ENCODE measurements at regions of chr19 and their contacts with region 1.

Region 1: DNA sequence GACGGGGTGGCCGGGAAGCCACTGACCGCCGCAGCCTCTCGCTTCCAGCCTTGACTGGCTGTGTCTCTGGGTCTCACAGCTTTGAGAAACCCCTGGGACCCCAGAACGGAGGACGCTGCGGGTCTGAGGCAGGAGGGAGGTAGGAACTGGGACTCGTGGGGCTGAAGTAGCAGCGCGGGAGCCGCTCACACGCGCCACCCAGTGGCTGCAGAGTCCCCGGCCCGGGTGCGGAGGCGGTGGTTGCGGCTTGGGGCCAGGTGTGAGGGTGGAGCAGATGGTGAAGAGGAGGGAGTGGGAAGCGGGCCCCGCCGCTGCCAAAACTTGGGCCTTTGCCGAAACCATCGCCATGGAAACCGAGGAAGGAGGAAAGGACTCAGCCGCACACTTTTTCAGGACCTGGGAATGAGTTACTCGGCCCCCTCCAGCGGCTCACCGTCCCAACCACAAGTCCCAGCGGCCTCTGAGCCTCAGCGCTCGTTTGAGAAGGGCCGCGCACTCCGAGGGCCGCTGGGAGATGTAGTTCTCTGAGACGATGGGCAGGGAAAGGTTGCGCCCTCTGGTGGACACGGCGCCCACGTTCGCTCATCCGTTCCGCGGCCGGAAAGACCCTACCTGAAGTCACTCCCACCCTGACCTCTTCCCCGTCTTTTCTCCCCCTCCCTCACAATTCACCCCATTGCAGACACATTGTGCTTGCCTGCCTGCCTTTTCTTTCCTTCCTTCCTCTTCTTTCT is 2.2 kb upstream of the SLC17A7 start:
- DNase-seq: peak; percentile 97
- ATAC-seq: peak; percentile 91
- H3K4me3 Mint-ChIP-seq: peak overlapping the region; percentile 73
- H3K27ac Mint-ChIP-seq: peak overlapping the region; percentile 83
- H3K4me1 Mint-ChIP-seq: peaks cover 33% of the 10 kb centered on the region
- H3K27me3 Mint-ChIP-seq: peaks cover 37% of the 10 kb centered on the region

Region 2: GRCh38 chr19:49085020-49085867 is 358.3 kb before region 1 on chr19 and contains the start of gene SNRNP70:
- CTCF ChIA-PET with region 1: no interaction called
- POLR2A ChIA-PET with region 1: no interaction called
- intact Hi-C with region 1: loop called in 1 of 2 experiments (anchors 2 kb)
- DNase-seq: peak; percentile 99
- ATAC-seq: peak; percentile 99
- H3K4me3 Mint-ChIP-seq: peak within 1 kb of the TSS; percentile 98
- H3K27ac Mint-ChIP-seq: peak within 1 kb of the TSS; percentile 96
- H3K4me1 Mint-ChIP-seq: peaks cover 31% of the 10 kb centered on the region
- H3K27me3 Mint-ChIP-seq: peaks cover 2% of the 10 kb centered on the region
- total RNA-seq, gene SNRNP70: 225 to 306 TPM

Region 3: DNA sequence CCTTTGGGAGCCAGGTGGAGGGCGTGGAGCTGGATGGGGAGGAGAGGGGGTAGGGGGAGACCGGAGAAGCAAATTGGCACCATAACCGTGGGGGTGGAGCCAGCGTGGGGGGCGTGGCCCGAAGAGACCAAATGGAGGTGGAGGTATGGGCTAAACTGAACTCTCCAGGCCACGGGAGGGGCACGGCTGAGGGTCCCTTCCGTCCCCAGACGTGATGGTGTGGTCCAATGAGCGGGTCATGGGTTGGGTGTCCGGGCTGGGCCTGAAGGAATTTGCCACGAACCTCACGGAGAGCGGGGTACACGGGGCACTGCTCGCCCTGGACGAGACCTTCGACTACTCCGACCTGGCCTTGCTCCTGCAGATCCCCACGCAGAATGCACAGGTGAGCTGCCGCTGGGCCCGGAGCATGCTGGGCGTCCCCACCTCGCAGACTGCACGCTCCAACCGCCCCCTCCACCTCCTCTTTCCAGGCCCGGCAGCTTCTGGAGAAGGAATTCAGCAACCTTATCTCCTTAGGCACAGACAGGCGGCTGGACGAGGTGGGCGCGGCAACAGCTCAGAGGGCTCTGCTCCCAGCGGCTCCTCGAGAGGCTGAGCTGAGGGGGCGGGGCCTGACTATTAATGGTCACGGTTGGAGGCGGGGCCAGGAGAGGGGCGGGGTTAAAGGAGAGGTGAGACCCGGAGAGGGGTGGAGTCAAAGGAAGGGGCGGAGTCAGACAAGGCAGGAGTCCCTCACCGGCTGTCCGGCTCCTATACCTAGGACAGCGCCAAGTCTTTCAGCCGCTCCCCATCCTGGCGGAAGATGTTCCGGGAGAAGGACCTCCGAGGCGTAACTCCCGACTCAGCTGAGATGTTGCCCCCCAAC is 294.5 kb before region 1 on chr19:
- CTCF ChIA-PET with region 1: no interaction called
- POLR2A ChIA-PET with region 1: no interaction called
- intact Hi-C with region 1: loop called in 1 of 2 experiments (anchors 2 kb)
- DNase-seq: peak; percentile 93
- ATAC-seq: peak; percentile 53
- H3K4me3 Mint-ChIP-seq: peak overlapping the region; percentile 67
- H3K27ac Mint-ChIP-seq: no peak overlapping the region
- H3K4me1 Mint-ChIP-seq: peaks cover 28% of the 10 kb centered on the region
- H3K27me3 Mint-ChIP-seq: peaks cover 58% of the 10 kb centered on the region

Region 4: GRCh38 chr19:49363268-49364082 is 80.1 kb before region 1 on chr19 and contains the start of gene DKKL1:
- CTCF ChIA-PET with region 1: no interaction called
- POLR2A ChIA-PET with region 1: no interaction called
- intact Hi-C with region 1: loop called in 1 of 2 experiments (anchors 1 kb)
- DNase-seq: peak; percentile 92
- ATAC-seq: peak; percentile 88
- H3K4me3 Mint-ChIP-seq: no peak within 1 kb of the TSS
- H3K27ac Mint-ChIP-seq: no peak within 1 kb of the TSS
- H3K4me1 Mint-ChIP-seq: peaks cover 11% of the 10 kb centered on the region
- H3K27me3 Mint-ChIP-seq: peaks cover 23% of the 10 kb centered on the region
- total RNA-seq, gene DKKL1: not detected

Region 5: DNA sequence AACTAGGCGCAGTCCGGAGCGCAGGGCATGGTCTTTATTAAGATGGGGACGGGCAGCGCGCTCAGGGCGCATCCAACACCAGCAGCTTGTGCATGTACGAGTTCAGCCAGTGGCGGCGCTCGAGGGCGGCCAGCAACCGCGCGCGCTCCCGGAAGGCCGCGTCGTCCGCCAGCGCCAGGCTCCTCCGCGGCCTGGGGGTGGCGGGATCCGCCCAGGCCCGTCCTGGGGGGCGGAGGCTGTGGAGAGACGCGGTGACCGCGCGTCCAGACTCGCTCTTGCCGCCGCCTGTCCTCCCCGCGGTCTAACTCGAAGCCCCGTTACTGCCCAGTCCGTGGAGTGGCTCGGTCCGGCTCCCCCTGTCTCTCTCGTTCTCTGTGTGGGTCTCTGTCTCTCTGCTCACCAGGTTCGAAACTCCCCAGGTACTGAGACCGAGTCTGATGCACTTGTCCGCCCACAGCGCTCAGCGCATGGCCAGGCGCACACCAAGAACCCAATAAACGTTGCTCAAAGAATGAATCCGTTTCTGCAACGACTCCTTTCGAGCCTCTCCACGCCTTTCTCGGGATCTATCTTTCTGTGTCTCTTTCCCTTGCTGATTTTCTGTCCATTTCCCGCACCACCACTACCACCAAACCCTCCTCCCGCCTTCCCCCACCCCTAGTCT is 21.0 kb before region 1 on chr19:
- CTCF ChIA-PET with region 1: interaction called, 3 read pairs
- POLR2A ChIA-PET with region 1: no interaction called
- intact Hi-C with region 1: loop called in 1 of 2 experiments (anchors 1 kb)
- DNase-seq: peak; percentile 83
- ATAC-seq: peak; percentile 77
- H3K4me3 Mint-ChIP-seq: peak overlapping the region; percentile 57
- H3K27ac Mint-ChIP-seq: no peak overlapping the region
- H3K4me1 Mint-ChIP-seq: peaks cover 43% of the 10 kb centered on the region
- H3K27me3 Mint-ChIP-seq: peaks cover 72% of the 10 kb centered on the region

Region 6: DNA sequence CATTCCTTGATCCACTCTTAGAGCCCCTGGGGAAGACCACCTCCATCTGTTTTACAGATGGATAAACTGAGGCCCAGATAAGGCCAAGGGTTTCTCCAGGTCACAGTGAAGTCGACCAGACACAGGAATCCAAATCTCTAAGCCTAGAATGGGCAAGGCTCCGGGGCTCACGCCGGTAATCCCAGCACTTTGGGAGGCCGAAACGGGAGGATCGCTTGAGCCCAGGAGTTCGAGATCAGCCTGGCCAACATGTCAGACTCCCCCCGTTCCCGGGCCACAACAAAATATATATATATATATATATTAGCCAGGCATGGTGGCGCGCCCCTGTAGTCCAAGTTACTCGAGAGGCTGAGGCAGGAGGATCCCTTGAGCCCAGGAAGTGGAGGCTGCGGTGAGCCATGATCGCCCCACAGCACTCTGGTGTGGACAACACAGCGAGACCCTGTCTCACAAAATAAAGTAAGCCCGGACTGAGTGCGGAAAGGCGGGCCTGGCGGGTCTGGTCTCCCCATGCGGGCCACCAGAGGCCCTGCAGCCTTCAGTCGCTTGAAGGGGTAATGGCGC is 43.3 kb after region 1 on chr19:
- CTCF ChIA-PET with region 1: no interaction called
- POLR2A ChIA-PET with region 1: no interaction called
- intact Hi-C with region 1: no loop called
- DNase-seq: no peak
- ATAC-seq: no peak
- H3K4me3 Mint-ChIP-seq: peak overlapping the region; percentile 99
- H3K27ac Mint-ChIP-seq: peak overlapping the region; percentile 97
- H3K4me1 Mint-ChIP-seq: peaks cover 25% of the 10 kb centered on the region
- H3K27me3 Mint-ChIP-seq: no peaks in the 10 kb centered on the region

Region 7: DNA sequence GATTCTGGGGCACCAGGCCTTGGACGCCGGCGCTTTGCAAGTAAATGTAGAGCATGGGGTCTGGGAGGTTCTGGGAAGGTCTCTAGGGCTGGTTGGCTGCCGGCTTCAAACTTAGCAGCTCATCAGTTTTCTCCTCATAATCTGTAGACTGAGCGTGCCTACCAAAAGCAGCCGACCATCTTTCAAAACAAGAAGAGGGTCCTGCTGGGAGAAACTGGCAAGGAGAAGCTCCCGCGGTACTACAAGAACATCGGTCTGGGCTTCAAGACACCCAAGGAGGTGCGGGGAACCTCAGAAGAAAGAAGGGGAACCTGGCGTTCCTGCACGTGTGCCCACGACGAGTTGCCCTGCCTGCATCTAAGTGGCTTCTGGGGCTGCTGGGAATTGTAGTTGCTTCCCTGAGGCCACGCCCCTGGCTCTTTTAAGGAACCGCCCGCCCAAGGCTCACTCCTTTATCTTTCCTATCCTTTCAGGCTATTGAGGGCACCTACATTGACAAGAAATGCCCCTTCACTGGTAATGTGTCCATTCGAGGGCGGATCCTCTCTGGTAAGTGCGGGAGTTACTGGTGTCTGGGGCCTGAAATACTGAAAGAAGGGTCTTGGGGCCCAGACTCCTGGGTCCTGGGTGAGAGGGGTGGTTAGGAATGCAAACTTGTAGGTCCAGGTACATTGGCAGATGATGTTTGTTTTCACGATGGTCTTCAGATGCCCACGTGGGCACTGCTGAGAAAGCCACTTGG is 53.7 kb after region 1 on chr19:
- CTCF ChIA-PET with region 1: no interaction called
- POLR2A ChIA-PET with region 1: no interaction called
- intact Hi-C with region 1: loop called in 1 of 2 experiments (anchors 2 kb)
- DNase-seq: peak; percentile 86
- ATAC-seq: peak; percentile 5
- H3K4me3 Mint-ChIP-seq: peak overlapping the region; percentile 93
- H3K27ac Mint-ChIP-seq: peak overlapping the region; percentile 98
- H3K4me1 Mint-ChIP-seq: peaks cover 47% of the 10 kb centered on the region
- H3K27me3 Mint-ChIP-seq: no peaks in the 10 kb centered on the region

Measured in activated CD4-positive, alpha-beta T cell treated with anti-CD3 and anti-CD28 coated beads for 36 hours (primary cell).